H1 (cell line): ENCODE measurements at regions of chr7 and their contacts with region 1.

Region 1: DNA sequence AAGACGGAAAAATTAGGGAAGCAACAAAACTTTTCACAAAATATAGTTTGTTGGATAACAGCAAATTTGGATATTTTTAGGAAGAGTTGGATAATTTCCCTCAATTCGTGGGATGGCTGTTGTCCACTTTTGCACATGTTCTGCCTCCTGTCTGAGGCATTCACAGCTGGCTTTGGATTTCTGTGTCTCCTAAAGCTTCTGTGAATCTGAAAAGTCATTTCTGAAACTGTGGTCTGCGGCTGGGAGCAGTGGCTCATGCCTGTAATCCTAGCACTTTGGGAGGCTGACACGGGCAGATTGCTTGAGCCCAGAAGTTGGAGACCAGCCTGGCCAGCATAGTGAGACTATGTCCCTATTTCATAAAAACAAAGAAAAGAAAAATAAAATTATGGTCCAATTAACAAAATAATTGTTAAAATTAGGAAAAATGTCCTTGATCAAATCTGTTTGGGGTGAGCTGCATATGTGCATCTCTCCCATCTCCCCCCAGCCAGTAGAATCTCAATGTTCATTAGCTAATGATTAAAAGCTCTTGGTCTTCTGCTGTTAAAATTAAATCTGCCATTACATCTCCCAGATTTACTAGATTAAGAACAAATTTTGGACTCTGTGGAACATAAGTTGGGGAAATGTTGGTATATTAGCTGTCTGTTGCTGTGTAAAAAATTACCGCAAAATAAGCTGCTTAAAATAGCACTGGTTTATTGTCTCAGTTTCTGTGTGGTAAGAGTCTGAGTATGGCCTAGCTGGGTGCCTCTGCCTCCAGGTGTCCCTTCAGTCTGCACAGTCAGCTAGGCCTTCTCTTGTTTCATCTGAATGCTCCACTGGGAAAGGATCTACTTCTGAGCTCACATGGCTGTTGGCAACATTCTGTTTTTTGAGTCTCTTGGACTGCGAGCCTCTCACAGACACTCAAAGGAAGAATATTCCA is 332.0 kb upstream of the FZD1 start:
- DNase-seq: no peak
- H3K4me3 ChIP-seq: no peak overlapping the region
- H3K27ac ChIP-seq: 0 out of 2 replicates have a peak overlapping the region, but pooled peaks have one; percentile 5
- H3K4me1 ChIP-seq: peaks cover 0 to 2% (median 0%) of the 10 kb centered on the region in 4 experiments; a peak in 1 of 7 replicates
- H3K27me3 ChIP-seq: no peaks in the 10 kb centered on the region
- CTCF ChIP-seq: no peak
- EP300 ChIP-seq: no peak
- POLR2A ChIP-seq: no peak
- RAD21 ChIP-seq: no peak

Region 2: GRCh38 chr7:90919796-90920195 is 12.5 kb before region 1 on chr7:
- CTCF ChIA-PET with region 1: interaction called, 11 read pairs
- POLR2A ChIA-PET with region 1: no interaction called
- DNase-seq: no peak
- H3K4me3 ChIP-seq: no peak overlapping the region
- H3K27ac ChIP-seq: no peak overlapping the region
- H3K4me1 ChIP-seq: no peaks in the 10 kb centered on the region
- H3K27me3 ChIP-seq: no peaks in the 10 kb centered on the region
- CTCF ChIP-seq: no peak
- EP300 ChIP-seq: no peak
- POLR2A ChIP-seq: no peak
- RAD21 ChIP-seq: no peak

Region 3: DNA sequence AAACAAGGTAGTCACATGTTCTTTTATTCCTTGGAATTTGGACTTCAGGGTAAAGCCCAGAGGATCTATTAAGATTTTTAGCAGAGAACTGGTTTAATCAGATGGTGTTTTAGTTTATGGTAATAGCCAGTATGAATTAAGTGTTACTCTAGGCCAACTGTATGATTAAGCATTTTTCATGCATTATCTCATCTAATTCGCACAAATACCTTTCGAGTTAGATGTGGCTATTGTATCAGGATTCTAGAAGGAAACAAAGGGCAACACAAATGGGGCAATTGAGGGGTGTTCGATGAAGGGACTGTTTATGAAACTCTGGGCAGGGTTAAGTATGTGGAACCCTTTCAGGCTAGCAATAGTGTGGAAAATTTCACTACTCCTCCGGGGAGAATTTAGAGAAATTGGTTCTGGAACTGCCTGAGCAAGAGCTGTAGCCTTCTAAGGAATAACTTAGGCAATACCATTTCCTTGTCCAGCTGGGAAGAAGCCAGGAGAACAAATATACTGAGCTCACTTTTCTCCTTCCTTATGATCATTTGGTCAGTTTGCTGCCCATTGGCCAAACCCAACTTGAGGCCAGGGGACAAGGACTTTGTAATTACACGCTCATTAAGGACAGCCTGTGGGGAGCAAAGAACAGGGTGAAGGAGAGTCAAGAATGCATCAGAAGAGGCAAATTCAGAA is 13.0 kb after region 1 on chr7:
- CTCF ChIA-PET with region 1: interaction called, 14 read pairs
- POLR2A ChIA-PET with region 1: interaction called, 5 read pairs
- DNase-seq: no peak
- H3K4me3 ChIP-seq: no peak overlapping the region
- H3K27ac ChIP-seq: no peak overlapping the region
- H3K4me1 ChIP-seq: no peaks in the 10 kb centered on the region
- H3K27me3 ChIP-seq: no peaks in the 10 kb centered on the region
- CTCF ChIP-seq: no peak
- EP300 ChIP-seq: no peak
- POLR2A ChIP-seq: no peak
- RAD21 ChIP-seq: no peak

Region 4: GRCh38 chr7:90955641-90956207 is 23.5 kb after region 1 on chr7:
- CTCF ChIA-PET with region 1: no interaction called
- POLR2A ChIA-PET with region 1: no interaction called
- DNase-seq: no peak
- H3K4me3 ChIP-seq: no peak overlapping the region
- H3K27ac ChIP-seq: no peak overlapping the region
- H3K4me1 ChIP-seq: peaks cover 0 to 19% (median 5%) of the 10 kb centered on the region in 4 experiments; a peak in 3 of 7 replicates
- H3K27me3 ChIP-seq: no peaks in the 10 kb centered on the region
- CTCF ChIP-seq: no peak
- EP300 ChIP-seq: no peak
- POLR2A ChIP-seq: no peak
- RAD21 ChIP-seq: peak; percentile 19 to 25; a peak in 1 of 4 replicates